ENCODE measurements at regions of chr20 and their contacts with region 1.

Region 1: GRCh38 chr20:53623454-53624211 is 30.0 kb upstream of the ZNF217 start:
- DNase-seq: peak; percentile 89
- ATAC-seq: peak; percentile 62
- H3K4me3 ChIP-seq: peak overlapping the region; percentile 63
- H3K27ac ChIP-seq: peak overlapping the region; percentile 89
- H3K4me1 ChIP-seq: peaks cover 41% of the 10 kb centered on the region
- H3K27me3 ChIP-seq: no peaks in the 10 kb centered on the region
- CTCF ChIP-seq: peak; percentile 38; the same call in 1 of the 2 replicates

Region 2: GRCh38 chr20:53453076-53453475 is 170.6 kb before region 1 on chr20:
- CTCF ChIA-PET with region 1: no interaction called
- POLR2A ChIA-PET with region 1: no interaction called
- intact Hi-C with region 1: no loop called
- DNase-seq: no peak
- ATAC-seq: no peak
- H3K4me3 ChIP-seq: no peak overlapping the region
- H3K27ac ChIP-seq: no peak overlapping the region
- H3K4me1 ChIP-seq: no peaks in the 10 kb centered on the region
- H3K27me3 ChIP-seq: no peaks in the 10 kb centered on the region
- CTCF ChIP-seq: no peak

Region 3: DNA sequence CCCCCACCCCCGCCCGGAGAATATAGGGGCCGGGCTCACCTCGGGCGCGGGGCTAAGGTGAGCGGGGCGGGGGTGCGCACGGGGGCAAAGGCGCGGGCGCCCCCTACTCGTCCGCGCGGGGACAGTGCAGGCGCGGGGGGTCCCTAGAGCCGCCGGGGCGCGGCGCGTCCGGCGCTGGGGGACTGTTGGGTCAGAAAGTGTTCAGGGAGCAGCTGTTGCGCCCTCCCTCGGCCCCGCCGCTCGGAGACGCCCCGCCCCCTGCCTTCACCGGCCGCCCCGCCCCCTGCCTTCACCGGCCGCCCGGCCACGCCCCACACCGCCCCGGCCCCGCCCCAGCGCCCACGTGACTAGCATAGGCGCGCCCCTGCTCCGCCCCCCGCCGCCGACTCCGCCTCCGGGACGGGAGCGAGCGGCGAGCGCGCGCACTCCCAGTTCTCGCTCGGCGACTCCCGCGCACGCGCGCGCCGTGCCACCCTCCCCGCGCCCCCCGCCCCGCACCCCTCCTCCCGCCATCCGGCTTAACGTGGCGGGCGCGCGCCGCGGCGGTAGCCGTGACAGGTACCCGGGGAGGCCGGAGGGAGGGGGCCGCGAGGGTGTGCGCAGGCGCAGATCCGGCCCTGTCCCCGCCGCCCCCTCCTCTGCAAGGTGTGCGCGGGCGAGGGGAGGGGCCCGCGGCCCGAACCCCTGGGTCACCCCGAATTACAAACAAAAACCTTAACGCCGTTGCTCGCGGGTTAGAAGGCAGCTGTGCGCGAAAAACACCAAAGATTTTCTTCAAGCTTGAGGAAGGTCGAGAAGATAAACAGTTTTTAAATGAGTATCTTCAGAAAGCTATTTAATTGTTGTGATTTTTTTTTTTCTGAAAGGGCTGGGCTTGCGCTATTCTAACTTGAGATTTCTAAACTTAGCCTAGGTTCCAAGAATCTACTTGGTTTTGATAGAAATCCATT is 29.3 kb before region 1 on chr20:
- CTCF ChIA-PET with region 1: interaction called, 4 read pairs
- POLR2A ChIA-PET with region 1: interaction called, 7 read pairs
- intact Hi-C with region 1: loop called (anchors 1 kb)
- DNase-seq: peak; percentile 98
- ATAC-seq: peak; percentile 69
- H3K4me3 ChIP-seq: peak overlapping the region; percentile 88
- H3K27ac ChIP-seq: peak overlapping the region; percentile 65
- H3K4me1 ChIP-seq: peaks cover 41% of the 10 kb centered on the region
- H3K27me3 ChIP-seq: no peaks in the 10 kb centered on the region
- CTCF ChIP-seq: no peak

Region 4: GRCh38 chr20:53643031-53643832 is 19.6 kb after region 1 on chr20:
- CTCF ChIA-PET with region 1: interaction called, 10 read pairs
- POLR2A ChIA-PET with region 1: interaction called, 7 read pairs
- intact Hi-C with region 1: loop called (anchors 2 kb)
- DNase-seq: peak; percentile 94
- ATAC-seq: peak; percentile 92
- H3K4me3 ChIP-seq: peak overlapping the region; percentile 51
- H3K27ac ChIP-seq: peak overlapping the region; percentile 80
- H3K4me1 ChIP-seq: peaks cover 32% of the 10 kb centered on the region
- H3K27me3 ChIP-seq: no peaks in the 10 kb centered on the region
- CTCF ChIP-seq: no peak

Region 5: GRCh38 chr20:53692413-53693067 is 68.9 kb after region 1 on chr20:
- CTCF ChIA-PET with region 1: no interaction called
- POLR2A ChIA-PET with region 1: interaction called, 5 read pairs
- intact Hi-C with region 1: loop called (anchors 2 kb)
- DNase-seq: peak; percentile 74
- ATAC-seq: peak; percentile 16; the same call in 1 of the 2 replicates
- H3K4me3 ChIP-seq: no peak overlapping the region
- H3K27ac ChIP-seq: no peak overlapping the region
- H3K4me1 ChIP-seq: peaks cover 36% of the 10 kb centered on the region
- H3K27me3 ChIP-seq: no peaks in the 10 kb centered on the region
- CTCF ChIP-seq: no peak

Region 6: DNA sequence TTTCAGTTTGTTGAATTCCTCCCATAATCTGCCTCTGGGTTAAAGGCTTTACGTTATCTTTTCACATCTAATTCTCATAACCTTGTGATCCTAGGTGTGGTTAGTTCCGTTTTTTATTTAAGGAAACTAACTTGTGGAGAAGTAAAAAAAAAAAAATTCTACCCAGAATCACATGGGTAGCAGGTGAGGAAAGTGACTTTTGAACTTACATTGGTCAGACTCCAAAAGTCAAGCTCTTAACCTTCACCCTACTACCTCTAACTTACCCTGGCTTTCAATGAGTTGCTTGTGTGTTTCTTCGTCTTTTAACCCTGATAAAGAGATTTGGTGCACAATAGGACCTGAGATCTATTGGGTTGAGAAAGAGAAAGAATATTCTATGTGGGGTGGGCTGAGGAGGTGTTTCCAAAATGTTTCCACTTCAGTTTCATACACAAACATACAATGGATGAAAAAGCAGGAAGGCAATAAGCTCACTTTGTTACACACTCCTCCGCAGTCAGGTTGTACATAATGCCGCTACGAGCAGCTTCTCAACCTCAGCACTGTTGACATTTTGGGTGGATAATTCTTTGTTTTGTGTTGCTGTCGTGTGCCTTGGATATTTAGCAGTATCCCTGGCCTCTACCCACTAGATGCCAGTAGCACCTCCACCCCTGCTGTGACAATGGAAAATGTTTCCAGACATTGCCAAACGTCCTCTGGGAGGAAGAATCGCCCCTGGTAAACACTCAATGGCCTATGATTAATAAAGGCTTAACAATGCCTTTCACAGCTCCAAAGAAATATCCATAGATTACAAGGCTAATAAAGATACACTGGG is 163.0 kb after region 1 on chr20:
- CTCF ChIA-PET with region 1: no interaction called
- POLR2A ChIA-PET with region 1: interaction called, 4 read pairs
- intact Hi-C with region 1: loop called (anchors 1 kb)
- DNase-seq: peak; percentile 71
- ATAC-seq: peak; percentile 46
- H3K4me3 ChIP-seq: peak overlapping the region; percentile 27
- H3K27ac ChIP-seq: peak overlapping the region; percentile 87
- H3K4me1 ChIP-seq: peaks cover 58% of the 10 kb centered on the region
- H3K27me3 ChIP-seq: no peaks in the 10 kb centered on the region
- CTCF ChIP-seq: peak; percentile 39

Measured in PC-3 (cell line).